ENCODE measurements at regions of chr1 and their contacts with region 1.

Region 1: DNA sequence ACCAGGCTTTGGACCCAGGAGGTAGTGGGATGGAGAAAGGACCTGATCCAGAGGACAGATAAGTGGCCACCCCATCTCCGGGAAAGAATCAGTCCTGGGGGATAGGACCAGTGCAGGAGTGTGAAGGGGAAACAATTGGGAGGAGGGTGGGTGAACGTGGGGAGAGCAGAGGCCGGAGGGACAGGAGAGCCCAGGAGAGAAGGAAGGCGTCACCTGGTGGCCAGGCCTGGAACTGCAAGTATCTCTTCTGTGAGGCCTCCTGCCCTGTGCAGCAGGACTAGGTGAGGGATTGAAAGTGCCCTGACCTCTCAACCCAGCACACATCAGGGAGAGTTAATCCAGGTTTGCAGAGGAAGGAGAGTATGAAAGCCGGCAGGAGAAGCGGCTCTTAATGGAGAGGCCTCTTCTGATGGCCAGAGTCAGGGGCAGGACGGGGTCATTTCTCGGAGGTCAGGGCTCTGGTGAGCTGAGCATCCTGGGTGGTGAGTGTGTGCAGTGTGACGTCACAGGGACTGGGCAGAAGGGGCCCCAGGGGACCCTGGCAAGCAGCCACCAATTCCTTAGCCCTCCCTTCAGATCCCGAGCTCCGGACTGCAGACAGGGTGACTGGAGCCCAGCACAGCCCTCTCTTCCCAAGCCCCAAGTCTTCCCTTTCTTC is 9.2 kb upstream of the LAD1 start:
- DNase-seq: peak; percentile 91
- H3K4me3 ChIP-seq: no peak overlapping the region; a peak in 1 of 4 replicates
- H3K27ac ChIP-seq: no peak overlapping the region
- H3K4me1 ChIP-seq: peaks cover 0 to 8% of the 10 kb centered on the region in 2 experiments; a peak in 1 of 4 replicates
- H3K27me3 ChIP-seq: peaks cover 31% of the 10 kb centered on the region; the same call in 1 of the 2 replicates
- CTCF ChIP-seq: peak; percentile 95
- EP300 ChIP-seq: no peak
- RAD21 ChIP-seq: peak; percentile 78

Region 2: GRCh38 chr1:201376464-201377374 is 31.6 kb before region 1 on chr1:
- CTCF ChIA-PET with region 1: interaction called, 105 read pairs
- POLR2A ChIA-PET with region 1: no interaction called
- DNase-seq: peak; percentile 58
- H3K4me3 ChIP-seq: no peak overlapping the region
- H3K27ac ChIP-seq: peak overlapping the region in 1 of 2 experiments; percentile 85; a peak in 2 of 4 replicates
- H3K4me1 ChIP-seq: peaks cover 0 to 32% of the 10 kb centered on the region in 2 experiments; a peak in 1 of 4 replicates
- H3K27me3 ChIP-seq: peaks cover 40% of the 10 kb centered on the region
- CTCF ChIP-seq: peak; percentile 33; the same call in 1 of the 2 replicates
- EP300 ChIP-seq: no peak
- RAD21 ChIP-seq: no peak

Region 3: DNA sequence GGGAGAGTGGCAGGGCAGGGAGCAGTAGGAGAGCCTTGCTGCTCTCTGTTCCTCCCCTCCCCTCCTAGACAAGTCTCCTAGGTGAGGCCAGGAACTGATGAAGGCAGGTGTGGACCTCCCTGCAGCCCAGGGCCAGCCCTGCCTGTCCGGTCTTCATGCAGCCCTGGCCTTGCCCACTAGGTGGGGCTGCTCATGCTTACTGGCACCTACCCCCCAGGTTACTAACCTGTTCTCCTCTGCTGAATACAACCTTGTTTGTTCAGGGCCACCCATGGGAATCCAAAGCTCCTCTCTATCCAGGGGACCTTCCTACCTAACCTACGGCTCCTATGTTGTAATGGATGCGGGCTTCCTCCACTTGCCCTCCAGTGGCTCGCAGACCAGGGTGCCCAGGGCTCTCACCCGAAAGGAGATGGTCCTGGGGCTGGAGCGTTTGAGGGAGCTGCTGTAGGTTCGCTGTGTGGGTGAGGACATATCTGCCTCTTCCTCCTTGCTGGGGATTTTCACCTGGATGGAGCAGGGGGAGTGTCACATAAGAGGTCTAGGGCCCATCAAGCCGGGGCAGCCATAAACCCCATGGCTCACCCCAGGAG is 22.9 kb before region 1 on chr1:
- CTCF ChIA-PET with region 1: interaction called, 105 read pairs
- POLR2A ChIA-PET with region 1: no interaction called
- DNase-seq: peak; percentile 82
- H3K4me3 ChIP-seq: no peak overlapping the region; a peak in 1 of 4 replicates
- H3K27ac ChIP-seq: no peak overlapping the region
- H3K4me1 ChIP-seq: peaks cover 5 to 11% of the 10 kb centered on the region in 2 experiments; a peak in 3 of 4 replicates
- H3K27me3 ChIP-seq: no peaks in the 10 kb centered on the region
- CTCF ChIP-seq: peak; percentile 85
- EP300 ChIP-seq: no peak
- RAD21 ChIP-seq: peak; percentile 61

Region 4: GRCh38 chr1:201419746-201420607 is 11.7 kb after region 1 on chr1:
- CTCF ChIA-PET with region 1: interaction called, 10 read pairs
- POLR2A ChIA-PET with region 1: no interaction called
- DNase-seq: no peak
- H3K4me3 ChIP-seq: no peak overlapping the region
- H3K27ac ChIP-seq: no peak overlapping the region
- H3K4me1 ChIP-seq: peaks cover 0 to 7% of the 10 kb centered on the region in 2 experiments; a peak in 1 of 4 replicates
- H3K27me3 ChIP-seq: peaks cover 6% of the 10 kb centered on the region; the same call in 1 of the 2 replicates
- CTCF ChIP-seq: no peak
- EP300 ChIP-seq: no peak
- RAD21 ChIP-seq: no peak

Measured in SK-N-SH (cell line).